Heart left ventricle (tissue), 16 donors: ENCODE measurements at regions of chr9 and their contacts with region 1.

Region 1: GRCh38 chr9:76302947-76303940 is 91.0 kb downstream of the RFK start:
- DNase-seq: no peak
- ATAC-seq: peak in 2 of 4 donors; percentile 50 to 53
- H3K4me3 ChIP-seq: no peak overlapping the region
- H3K27ac ChIP-seq: no peak overlapping the region
- H3K4me1 ChIP-seq: peaks cover 0 to 8% (median 0%) of the 10 kb centered on the region in 12 donors
- H3K27me3 ChIP-seq: peaks cover 0 to 6% (median 0%) of the 10 kb centered on the region in 9 donors
- CTCF ChIP-seq: peak; percentile 57 to 80 (median 72)
- POLR2A ChIP-seq: no peak

Region 2: DNA sequence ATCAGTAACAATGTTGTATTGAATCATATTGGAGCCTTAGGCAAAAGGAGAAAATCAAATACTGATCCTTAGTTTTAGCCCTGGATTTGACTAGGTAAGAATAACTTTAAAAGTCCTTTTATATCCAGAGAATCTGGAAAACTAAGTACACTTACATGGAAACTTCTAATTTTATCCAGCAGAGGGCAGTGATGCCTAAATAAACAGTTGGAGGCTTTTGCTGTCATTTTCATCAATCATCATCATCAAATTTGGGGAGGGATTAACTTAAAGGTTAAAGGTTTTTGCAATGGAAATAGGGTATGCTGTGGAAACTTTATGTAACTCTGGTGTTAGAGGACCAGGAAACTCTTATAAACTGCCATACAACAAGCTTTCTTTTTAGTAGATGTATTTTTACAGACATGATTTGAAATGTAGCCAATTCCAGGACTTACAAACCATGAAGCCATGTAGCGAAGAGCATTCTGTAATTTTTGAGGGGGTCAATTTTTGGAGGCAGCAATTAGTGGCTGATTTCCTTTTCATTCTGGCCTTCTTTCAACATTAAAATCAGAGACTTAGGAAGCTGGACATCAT is 1102.3 kb before region 1 on chr9:
- intact Hi-C with region 1: loop called in 9 of 10 experiments (anchors 2 to 10 kb)
- DNase-seq: no peak
- ATAC-seq: no peak
- H3K4me3 ChIP-seq: no peak overlapping the region
- H3K27ac ChIP-seq: no peak overlapping the region
- H3K4me1 ChIP-seq: peaks cover 0 to 6% (median 0%) of the 10 kb centered on the region in 12 donors
- H3K27me3 ChIP-seq: no peaks in the 10 kb centered on the region
- CTCF ChIP-seq: peak; percentile 50 to 73 (median 66)
- POLR2A ChIP-seq: no peak

Region 3: DNA sequence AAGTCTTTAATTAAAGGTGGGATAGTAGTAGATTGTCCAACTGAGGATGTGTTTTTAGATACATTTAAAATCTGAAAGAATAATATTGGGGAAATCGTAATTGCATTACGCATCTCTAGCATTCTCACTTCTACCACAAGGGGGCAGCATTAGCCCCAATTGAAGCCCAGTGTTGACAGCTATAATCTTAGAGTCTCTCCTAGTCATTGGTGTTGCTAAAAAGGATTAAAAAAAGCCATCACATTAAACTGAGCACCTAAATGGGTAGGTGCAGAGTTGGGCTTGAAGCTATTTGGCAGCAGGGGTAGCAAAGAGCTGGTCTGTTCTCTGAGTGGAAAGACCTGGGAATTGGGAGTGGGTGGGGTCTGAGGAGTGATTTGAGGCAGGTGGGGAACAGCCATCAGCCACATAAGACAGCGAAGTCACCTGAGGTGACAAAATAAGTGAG is 1037.7 kb before region 1 on chr9:
- intact Hi-C with region 1: loop called in 9 of 10 experiments (anchors 2 to 10 kb)
- DNase-seq: peak in 2 of 5 donors; percentile 8 to 37
- ATAC-seq: peak in 3 of 4 donors; percentile 66 to 74 (median 74)
- H3K4me3 ChIP-seq: no peak overlapping the region
- H3K27ac ChIP-seq: no peak overlapping the region
- H3K4me1 ChIP-seq: peaks cover 0 to 7% (median 0%) of the 10 kb centered on the region in 12 donors
- H3K27me3 ChIP-seq: no peaks in the 10 kb centered on the region
- CTCF ChIP-seq: peak; percentile 80 to 97 (median 90)
- POLR2A ChIP-seq: no peak

Region 4: GRCh38 chr9:75333624-75334023 is 969.6 kb before region 1 on chr9:
- intact Hi-C with region 1: loop called in 1 of 10 experiments (anchors 5 kb)
- DNase-seq: no peak
- ATAC-seq: no peak
- H3K4me3 ChIP-seq: no peak overlapping the region
- H3K27ac ChIP-seq: no peak overlapping the region
- H3K4me1 ChIP-seq: no peaks in the 10 kb centered on the region
- H3K27me3 ChIP-seq: no peaks in the 10 kb centered on the region
- CTCF ChIP-seq: peak in 11 of 12 donors; percentile 25 to 62 (median 46)
- POLR2A ChIP-seq: no peak

Region 5: DNA sequence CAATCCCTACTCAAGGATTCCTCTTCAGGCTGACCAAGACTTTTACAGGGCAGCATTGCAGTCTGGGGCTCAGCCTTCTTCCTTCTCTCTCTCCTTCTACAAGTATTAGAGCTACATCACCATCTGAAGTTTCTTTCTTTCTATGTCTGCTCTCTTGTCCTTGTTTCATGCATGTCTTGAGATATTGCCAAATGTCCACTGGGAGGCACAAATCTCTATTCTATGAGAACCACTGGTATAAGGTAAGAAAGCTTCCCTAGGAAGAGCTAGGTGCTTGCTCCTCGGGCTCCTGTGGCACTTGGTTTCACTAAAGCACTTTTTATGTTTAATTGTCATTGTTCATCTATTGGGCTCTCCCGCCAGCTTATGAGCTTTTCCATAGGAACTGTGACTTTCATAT is 702.0 kb before region 1 on chr9:
- intact Hi-C with region 1: loop called in 1 of 10 experiments (anchors 10 kb)
- DNase-seq: no peak
- ATAC-seq: no peak
- H3K4me3 ChIP-seq: no peak overlapping the region
- H3K27ac ChIP-seq: no peak overlapping the region
- H3K4me1 ChIP-seq: peaks cover 0 to 7% (median 0%) of the 10 kb centered on the region in 12 donors
- H3K27me3 ChIP-seq: no peaks in the 10 kb centered on the region
- CTCF ChIP-seq: peak in 7 of 12 donors; percentile 5 to 30 (median 15)
- POLR2A ChIP-seq: no peak

Region 6: GRCh38 chr9:75890472-75891276 is 412.6 kb before region 1 on chr9 and contains the start of gene PCSK5:
- intact Hi-C with region 1: loop called in 2 of 10 experiments (anchors 10 kb)
- DNase-seq: peak; percentile 93 to 94 (median 93)
- ATAC-seq: peak; percentile 97 to 98 (median 98)
- H3K4me3 ChIP-seq: peak within 1 kb of the TSS; percentile 67 to 96 (median 84)
- H3K27ac ChIP-seq: peak within 1 kb of the TSS; percentile 56 to 89 (median 84)
- H3K4me1 ChIP-seq: peaks cover 0 to 29% (median 11%) of the 10 kb centered on the region in 12 donors
- H3K27me3 ChIP-seq: peaks cover 0 to 10% (median 0%) of the 10 kb centered on the region in 9 donors
- CTCF ChIP-seq: peak in 11 of 12 donors; percentile 12 to 62 (median 34)
- POLR2A ChIP-seq: peak in 1 of 2 donors; percentile 90
- total RNA-seq, gene PCSK5: 3.9 to 13.6 (median 6.0) TPM

Region 7: GRCh38 chr9:76219560-76220152 is 83.6 kb before region 1 on chr9:
- intact Hi-C with region 1: loop called in 3 of 10 experiments (anchors 5 kb)
- DNase-seq: no peak
- ATAC-seq: peak in 3 of 4 donors; percentile 54 to 70 (median 67)
- H3K4me3 ChIP-seq: peak overlapping the region in 1 of 12 donors; percentile 7
- H3K27ac ChIP-seq: no peak overlapping the region
- H3K4me1 ChIP-seq: peaks cover 0 to 7% (median 0%) of the 10 kb centered on the region in 12 donors
- H3K27me3 ChIP-seq: peaks cover 0 to 13% (median 0%) of the 10 kb centered on the region in 9 donors
- CTCF ChIP-seq: peak in 10 of 12 donors; percentile 16 to 54 (median 39)
- POLR2A ChIP-seq: no peak

Region 8: DNA sequence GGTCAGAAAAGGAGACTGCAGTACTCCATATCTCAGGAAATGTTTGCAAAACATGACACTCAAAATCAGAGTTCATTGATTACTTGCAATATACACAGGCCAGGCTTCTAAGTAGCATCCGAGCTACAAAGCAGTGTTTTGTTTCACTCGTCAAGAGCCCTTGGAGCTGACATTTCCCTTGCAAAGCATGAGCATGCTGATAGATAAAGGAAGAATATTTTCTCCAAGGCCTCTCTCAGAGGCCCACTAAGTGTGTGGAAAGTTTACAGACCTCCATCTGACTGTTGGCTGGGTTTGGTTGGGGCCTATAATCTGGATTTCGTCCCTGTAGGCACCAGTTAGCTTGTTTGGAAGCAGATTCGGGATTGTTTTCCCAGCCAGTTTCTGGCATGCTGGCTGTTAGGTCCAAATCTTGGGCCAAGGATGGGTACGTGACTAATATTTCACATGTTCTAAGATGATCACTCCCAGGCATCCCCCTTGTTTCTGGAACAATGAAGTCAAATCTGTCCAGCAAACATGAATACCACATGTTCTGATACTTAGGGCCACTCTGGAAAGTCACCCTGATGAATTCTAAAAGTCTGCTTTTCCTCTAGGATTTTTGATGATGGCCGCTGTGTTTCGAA is 70.3 kb before region 1 on chr9:
- intact Hi-C with region 1: no loop called
- DNase-seq: no peak
- ATAC-seq: no peak
- H3K4me3 ChIP-seq: no peak overlapping the region
- H3K27ac ChIP-seq: no peak overlapping the region
- H3K4me1 ChIP-seq: no peaks in the 10 kb centered on the region
- H3K27me3 ChIP-seq: peaks cover 0 to 5% (median 0%) of the 10 kb centered on the region in 9 donors
- CTCF ChIP-seq: no peak
- POLR2A ChIP-seq: no peak